Activated CD4-positive, alpha-beta T cell treated with anti-CD3 and anti-CD28 coated beads for 36 hours (primary cell): ENCODE measurements at regions of chr22 and their contacts with region 1.

Region 1: DNA sequence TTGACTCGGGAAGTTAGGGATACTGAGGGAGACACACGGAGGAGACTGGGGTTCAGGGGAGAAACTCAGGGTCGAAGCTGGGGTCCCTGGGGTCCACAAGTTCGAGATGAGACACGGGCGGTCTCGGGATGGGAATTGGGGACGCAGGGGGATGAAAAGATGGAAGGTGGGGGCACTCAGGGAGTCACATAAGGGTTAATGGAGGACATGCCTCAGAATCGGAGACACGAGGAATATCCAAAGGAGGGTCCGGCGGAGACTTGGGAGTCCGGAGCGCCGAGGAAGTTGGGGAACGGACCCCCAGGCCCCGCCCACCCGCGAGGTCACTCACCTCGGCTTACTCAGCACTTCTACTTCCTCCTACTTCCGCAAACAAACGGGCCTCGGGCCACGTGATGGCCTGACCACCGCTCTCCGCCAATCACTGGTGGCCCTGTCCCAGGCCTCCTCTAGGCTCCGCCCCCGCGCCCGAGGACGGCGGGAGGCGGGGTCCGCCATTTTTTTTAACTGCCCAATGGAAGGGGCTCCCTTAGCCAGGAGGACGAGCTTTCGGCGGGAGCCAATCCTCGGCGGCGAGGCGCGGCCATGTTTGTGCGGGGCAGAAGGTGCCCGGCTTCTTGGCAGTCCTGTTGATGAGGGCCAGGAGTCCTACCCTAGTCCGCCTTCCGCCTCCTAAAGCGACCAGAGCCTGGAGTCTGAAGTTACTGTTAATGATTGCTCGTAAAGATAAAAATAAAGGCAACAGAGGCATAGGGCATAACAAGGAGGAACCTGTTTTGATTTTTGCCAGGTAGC is at the start of gene PLA2G6:
- DNase-seq: peak; percentile 99
- ATAC-seq: peak; percentile 92
- H3K4me3 Mint-ChIP-seq: peak within 1 kb of the TSS; percentile 96
- H3K27ac Mint-ChIP-seq: peak within 1 kb of the TSS; percentile 98
- H3K4me1 Mint-ChIP-seq: peaks cover 32% of the 10 kb centered on the region
- H3K27me3 Mint-ChIP-seq: no peaks in the 10 kb centered on the region
- total RNA-seq, gene PLA2G6: 54.0 to 57.3 TPM

Region 2: DNA sequence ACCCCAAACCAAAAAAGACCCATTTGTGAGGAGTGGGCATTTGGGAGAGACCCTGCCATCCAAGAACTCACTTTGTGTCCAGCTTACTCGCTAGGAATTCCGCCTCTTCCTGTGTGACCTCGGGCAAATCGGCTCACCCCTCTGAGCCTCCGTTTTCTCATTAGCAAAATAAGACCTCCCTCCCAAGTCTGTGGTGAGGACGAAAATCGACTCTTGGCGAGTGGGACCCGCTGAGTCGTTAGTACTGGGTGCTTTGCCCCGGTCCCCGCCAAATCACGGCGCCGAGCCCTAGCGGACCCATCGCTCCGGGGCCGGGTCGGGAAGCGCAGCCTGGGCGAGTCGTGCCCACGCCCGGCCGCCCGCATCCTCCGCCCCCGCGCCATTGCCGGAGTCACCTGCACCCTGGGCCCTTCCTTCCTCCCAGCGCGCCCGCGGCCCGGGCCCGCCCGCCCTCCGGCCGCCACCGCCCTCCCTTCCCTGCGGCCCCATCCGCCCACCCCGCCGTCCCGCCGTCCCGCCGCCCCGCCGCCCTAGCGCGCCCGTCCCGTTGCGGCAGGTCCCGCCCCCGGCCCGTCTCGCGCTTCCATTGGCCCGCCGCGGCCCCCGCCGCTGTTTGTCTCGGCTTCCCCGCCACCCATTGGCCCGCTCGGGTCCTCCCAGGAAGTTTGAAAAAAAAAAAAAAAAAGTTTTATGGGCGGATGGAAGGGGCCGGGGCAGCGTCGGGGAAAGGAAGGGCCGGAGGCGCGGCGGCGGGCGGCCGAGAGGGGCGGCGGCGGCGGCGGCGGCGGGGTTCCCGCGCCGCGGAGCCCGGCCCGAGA is 435.9 kb before region 1 on chr22:
- CTCF ChIA-PET with region 1: no interaction called
- POLR2A ChIA-PET with region 1: no interaction called
- intact Hi-C with region 1: loop called in 1 of 2 experiments (anchors 1 kb)
- DNase-seq: peak; percentile 95
- ATAC-seq: peak; percentile 91
- H3K4me3 Mint-ChIP-seq: peak overlapping the region; percentile 84
- H3K27ac Mint-ChIP-seq: peak overlapping the region; percentile 90
- H3K4me1 Mint-ChIP-seq: peaks cover 25% of the 10 kb centered on the region
- H3K27me3 Mint-ChIP-seq: no peaks in the 10 kb centered on the region

Region 3: DNA sequence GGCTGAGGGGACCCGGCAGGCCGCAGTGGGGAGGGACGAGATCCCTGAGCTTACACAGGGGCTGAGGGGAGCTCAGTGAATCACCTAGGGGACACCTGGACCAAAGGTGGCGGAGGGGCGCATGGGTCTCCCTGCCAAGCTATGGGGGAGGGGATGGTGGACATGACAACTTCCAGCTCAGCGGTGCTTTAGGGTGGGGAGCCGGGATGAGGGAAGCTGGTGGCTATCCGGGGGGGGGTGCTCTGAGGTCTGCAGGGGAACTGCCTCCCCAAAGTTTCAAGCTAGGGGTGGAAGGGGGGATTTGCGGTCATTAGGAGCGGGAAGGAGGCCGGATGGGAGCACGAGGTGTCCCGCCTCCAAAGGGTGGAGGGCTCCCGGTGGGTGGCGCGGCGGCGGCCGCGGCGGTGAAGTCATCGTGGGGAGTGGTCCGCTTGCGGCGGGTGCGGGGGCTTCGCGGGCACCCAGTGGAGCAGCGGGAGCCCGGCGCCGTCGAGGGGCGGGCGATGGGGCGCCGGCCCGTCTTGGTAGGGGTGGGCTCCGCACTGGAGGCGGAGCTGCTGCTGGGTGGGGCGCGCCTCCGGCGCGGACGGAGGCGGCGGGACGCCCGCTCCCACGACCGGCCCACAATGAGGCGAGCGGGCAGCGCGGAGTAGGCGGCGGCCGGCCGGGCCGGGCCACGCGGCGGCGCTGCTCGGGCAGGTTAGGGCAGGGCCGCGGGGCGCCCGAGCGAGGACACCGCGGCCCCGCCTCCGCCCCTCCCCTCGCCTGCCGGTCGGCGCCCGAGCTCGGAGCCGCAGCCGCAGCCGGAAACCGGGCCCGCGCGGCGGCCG is 275.9 kb before region 1 on chr22 and contains the start of gene MICALL1:
- CTCF ChIA-PET with region 1: no interaction called
- POLR2A ChIA-PET with region 1: no interaction called
- intact Hi-C with region 1: loop called in 1 of 2 experiments (anchors 1 kb)
- DNase-seq: peak; percentile 80
- ATAC-seq: peak; percentile 86
- H3K4me3 Mint-ChIP-seq: peak within 1 kb of the TSS; percentile 72
- H3K27ac Mint-ChIP-seq: peak within 1 kb of the TSS; percentile 79
- H3K4me1 Mint-ChIP-seq: peaks cover 21% of the 10 kb centered on the region
- H3K27me3 Mint-ChIP-seq: no peaks in the 10 kb centered on the region
- total RNA-seq, gene MICALL1: 11.2 to 11.8 TPM

Region 4: DNA sequence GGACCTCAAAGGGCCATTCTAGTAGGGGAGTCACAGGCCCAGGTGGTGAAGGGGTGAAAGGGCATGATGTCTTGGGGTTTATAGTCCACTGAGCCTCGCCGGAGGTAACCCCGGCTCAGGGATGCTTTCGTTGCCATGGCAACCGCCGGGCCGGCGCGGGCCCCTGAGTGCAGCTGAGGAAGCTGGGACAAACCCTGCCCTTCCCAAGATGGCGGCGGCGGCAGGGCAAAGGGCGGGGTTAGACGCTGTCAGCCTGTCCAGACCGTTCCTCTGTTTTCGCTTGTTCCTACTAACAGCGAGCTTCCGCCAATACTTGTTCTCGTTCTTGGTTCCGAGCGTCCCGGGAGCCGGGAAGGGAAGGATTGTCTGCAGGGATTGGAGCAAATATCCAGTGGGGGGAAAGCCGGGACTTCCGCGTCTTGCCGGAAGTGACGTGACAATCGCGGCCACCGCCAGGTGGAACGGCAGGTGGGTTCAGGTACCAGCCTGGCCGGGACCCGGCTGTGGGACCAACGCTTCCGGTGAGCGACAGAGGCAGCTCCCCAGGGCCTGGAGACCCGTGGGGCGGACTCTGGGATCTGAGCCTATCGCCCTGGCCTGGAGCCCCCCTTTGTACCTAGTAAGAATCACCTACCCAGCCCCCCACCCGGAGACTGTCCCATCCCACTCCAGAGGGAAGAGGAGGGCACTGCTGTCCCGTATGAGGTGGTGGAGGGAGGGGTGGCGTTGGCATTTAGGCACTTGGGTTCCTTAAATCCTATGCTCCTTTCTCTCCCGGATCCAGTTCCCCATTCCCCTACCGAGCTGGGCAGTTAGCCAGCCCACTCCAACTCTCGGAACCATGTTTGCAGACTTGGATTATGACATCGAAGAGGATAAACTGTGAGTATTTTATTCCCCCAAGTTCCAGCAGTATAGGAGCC is 124.4 kb before region 1 on chr22 and contains the start of gene PICK1:
- CTCF ChIA-PET with region 1: interaction called, 3 read pairs
- POLR2A ChIA-PET with region 1: no interaction called
- intact Hi-C with region 1: loop called in 1 of 2 experiments (anchors 1 kb)
- DNase-seq: peak; percentile 92
- ATAC-seq: peak; percentile 93
- H3K4me3 Mint-ChIP-seq: peak within 1 kb of the TSS; percentile 88
- H3K27ac Mint-ChIP-seq: peak within 1 kb of the TSS; percentile 98
- H3K4me1 Mint-ChIP-seq: peaks cover 15% of the 10 kb centered on the region
- H3K27me3 Mint-ChIP-seq: no peaks in the 10 kb centered on the region
- total RNA-seq, gene PICK1: 14.9 to 17.2 TPM

Region 5: DNA sequence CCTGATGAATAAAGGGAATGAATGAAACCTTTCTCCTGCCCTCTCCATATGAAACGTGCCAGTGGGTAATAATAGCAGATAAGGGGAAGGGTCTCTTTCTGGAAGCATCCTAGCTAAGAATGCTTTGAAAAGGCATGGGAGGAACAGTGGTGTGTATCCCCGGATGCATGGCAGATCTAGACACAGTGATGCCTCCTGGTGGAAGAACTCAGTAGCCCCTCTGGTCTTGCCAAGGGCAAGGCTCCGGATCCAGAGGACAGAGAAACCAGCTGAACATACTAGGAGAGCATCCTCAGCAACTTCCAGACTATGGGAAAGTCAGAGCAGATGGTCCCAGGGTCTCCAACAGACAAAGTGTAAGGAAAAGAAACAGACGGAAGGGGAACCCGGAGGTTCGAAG is 77.6 kb before region 1 on chr22:
- CTCF ChIA-PET with region 1: no interaction called
- POLR2A ChIA-PET with region 1: no interaction called
- intact Hi-C with region 1: no loop called
- DNase-seq: no peak
- ATAC-seq: no peak
- H3K4me3 Mint-ChIP-seq: no peak overlapping the region
- H3K27ac Mint-ChIP-seq: no peak overlapping the region
- H3K4me1 Mint-ChIP-seq: peaks cover 4% of the 10 kb centered on the region
- H3K27me3 Mint-ChIP-seq: no peaks in the 10 kb centered on the region

Region 6: GRCh38 chr22:38236786-38237185 is 55.1 kb after region 1 on chr22:
- CTCF ChIA-PET with region 1: no interaction called
- POLR2A ChIA-PET with region 1: no interaction called
- intact Hi-C with region 1: no loop called
- DNase-seq: no peak
- ATAC-seq: no peak
- H3K4me3 Mint-ChIP-seq: no peak overlapping the region
- H3K27ac Mint-ChIP-seq: no peak overlapping the region
- H3K4me1 Mint-ChIP-seq: no peaks in the 10 kb centered on the region
- H3K27me3 Mint-ChIP-seq: no peaks in the 10 kb centered on the region

Region 7: DNA sequence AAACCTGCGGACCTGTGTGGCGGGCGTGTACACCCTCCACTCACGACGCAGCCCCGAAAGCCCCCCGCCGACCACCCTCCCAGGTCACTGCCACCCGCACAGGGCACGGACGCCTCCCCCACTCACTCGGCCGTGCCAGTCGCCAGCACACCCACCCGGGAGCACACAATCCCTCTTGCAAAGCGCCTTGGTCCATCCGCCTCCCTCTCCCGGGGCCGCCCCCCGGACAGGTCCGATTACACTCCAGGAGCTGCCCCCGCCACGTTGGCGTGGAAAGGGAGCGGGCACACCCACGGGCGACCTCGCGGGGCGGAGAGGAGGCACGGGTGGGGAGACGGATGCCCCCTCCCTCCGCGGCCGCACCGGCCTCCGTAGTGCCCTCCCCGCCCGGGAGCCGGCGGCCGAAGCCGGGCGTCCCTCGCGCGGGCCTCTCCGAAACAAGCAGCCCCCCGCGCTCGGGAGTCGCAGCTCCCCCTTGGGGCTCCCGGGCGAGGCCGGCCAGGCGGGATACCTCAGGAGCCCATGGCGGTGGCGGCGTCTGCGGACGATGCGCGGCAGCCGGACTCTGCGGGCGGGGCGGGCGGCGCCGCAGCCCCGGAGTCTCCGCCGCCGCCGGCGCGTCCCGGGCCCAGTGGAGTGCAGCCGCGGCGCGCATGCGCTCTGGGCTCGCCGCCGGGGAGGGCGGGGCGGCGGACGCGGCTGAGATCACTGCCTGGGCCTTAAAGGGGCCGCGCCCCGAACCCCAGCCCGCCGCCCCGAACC is 90.9 kb after region 1 on chr22 and contains the start of gene TMEM184B:
- CTCF ChIA-PET with region 1: no interaction called
- POLR2A ChIA-PET with region 1: no interaction called
- intact Hi-C with region 1: loop called in 1 of 2 experiments (anchors 1 kb)
- DNase-seq: peak; percentile 88
- ATAC-seq: peak; percentile 96
- H3K4me3 Mint-ChIP-seq: peak within 1 kb of the TSS; percentile 81
- H3K27ac Mint-ChIP-seq: peak within 1 kb of the TSS; percentile 89
- H3K4me1 Mint-ChIP-seq: peaks cover 35% of the 10 kb centered on the region
- H3K27me3 Mint-ChIP-seq: no peaks in the 10 kb centered on the region
- total RNA-seq, gene TMEM184B: 16.0 to 19.8 TPM

Region 8: DNA sequence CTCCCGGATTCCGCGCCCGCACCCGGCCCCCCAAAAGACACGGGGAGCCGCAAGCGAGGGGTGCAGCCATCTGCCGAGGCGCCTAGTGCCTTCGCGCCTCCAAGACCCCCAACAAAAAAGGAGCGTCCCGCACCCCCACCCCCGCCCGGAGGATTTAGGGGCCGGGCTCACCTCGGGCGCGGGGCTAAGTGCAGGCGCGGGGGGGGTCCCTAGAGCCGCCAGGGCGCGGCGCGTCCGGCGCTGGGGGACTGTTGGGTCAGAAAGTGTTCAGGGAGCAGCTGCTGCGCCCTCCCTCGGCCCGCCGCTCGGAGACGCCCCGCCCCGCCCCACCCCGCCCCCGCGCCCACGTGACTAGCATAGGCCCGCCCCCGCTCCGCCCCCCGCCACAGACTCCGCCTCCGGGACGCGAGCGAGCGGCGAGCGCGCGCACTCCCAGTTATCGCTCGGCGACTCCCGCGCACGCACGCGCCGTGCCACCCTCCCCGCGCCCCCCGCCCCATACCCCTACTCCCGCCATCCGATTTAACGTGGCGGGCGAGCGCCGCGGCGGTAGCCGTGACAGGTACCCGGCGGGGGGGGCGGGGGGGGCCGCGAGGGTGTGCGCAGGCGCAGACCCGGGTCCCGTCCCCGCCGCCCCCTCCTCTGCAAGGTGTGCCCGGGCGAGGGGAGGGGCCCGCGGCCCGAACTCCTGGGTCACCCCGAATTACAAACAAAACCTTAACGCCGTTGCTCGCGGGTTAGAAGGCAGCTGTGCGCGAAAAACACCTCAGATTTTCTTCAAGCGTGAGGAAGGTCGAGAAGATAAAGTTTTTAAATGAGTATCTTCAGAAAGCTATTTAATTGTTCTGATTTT is 217.2 kb after region 1 on chr22:
- CTCF ChIA-PET with region 1: no interaction called
- POLR2A ChIA-PET with region 1: no interaction called
- intact Hi-C with region 1: loop called in 1 of 2 experiments (anchors 2 kb)
- DNase-seq: peak; percentile 92
- ATAC-seq: peak; percentile 67
- H3K4me3 Mint-ChIP-seq: peak overlapping the region; percentile 72
- H3K27ac Mint-ChIP-seq: peak overlapping the region; percentile 47
- H3K4me1 Mint-ChIP-seq: peaks cover 38% of the 10 kb centered on the region
- H3K27me3 Mint-ChIP-seq: no peaks in the 10 kb centered on the region

Region 9: GRCh38 chr22:38656256-38657044 is 474.8 kb after region 1 on chr22 and contains the starts of genes CBY1 and FAM227A:
- CTCF ChIA-PET with region 1: no interaction called
- POLR2A ChIA-PET with region 1: no interaction called
- intact Hi-C with region 1: loop called in 1 of 2 experiments (anchors 1 kb)
- DNase-seq: peak; percentile 89
- ATAC-seq: peak; percentile 83
- H3K4me3 Mint-ChIP-seq: peak within 1 kb of the TSS; percentile 79
- H3K27ac Mint-ChIP-seq: peak within 1 kb of the TSS; percentile 93
- H3K4me1 Mint-ChIP-seq: peaks cover 11% of the 10 kb centered on the region
- H3K27me3 Mint-ChIP-seq: no peaks in the 10 kb centered on the region
- total RNA-seq, gene CBY1: 9.8 to 11.6 TPM
- total RNA-seq, gene FAM227A: 0.30 to 0.63 TPM